ENCODE measurements at regions of chr14 and their contacts with region 1.

Region 1: GRCh38 chr14:69611201-69612011 is at the start of gene SUSD6:
- DNase-seq: peak; percentile 90 to 94 (median 92)
- ATAC-seq: peak; percentile 93
- H3K4me3 ChIP-seq: peak within 1 kb of the TSS; percentile 7 to 51
- H3K27ac ChIP-seq: peak within 1 kb of the TSS; percentile 73 to 99 (median 92)
- H3K4me1 ChIP-seq: peaks cover 56% of the 10 kb centered on the region
- H3K27me3 ChIP-seq: no peaks in the 10 kb centered on the region
- CTCF ChIP-seq: peak in 1 of 7 experiments; percentile 22
- POLR2A ChIP-seq: peak; percentile 55 to 76 (median 63)
- total RNA-seq, gene SUSD6: 24.6 to 25.1 TPM

Region 2: DNA sequence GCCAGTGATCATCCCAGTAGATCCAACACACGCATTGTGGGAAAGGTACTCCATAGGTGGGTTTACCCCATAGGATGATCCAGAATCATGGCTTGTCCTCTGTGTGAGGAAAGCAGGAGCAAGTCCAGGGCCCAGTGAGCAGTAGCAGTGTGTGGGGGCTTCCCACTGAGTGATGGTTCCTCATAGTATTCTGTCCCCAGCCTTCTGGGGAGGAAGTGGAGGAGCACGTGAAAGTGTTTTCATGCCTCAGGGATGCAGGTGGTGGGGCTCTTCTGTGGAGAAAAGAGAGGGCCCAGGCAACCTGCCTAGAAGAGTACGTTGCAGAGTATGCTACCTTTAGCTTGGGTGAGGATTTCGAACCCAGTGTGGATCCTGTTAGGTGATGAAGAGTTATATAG is 56.5 kb after region 1 on chr14:
- intact Hi-C with region 1: loop called (anchors 10 kb)
- DNase-seq: no peak
- ATAC-seq: no peak
- H3K4me3 ChIP-seq: no peak overlapping the region
- H3K27ac ChIP-seq: peak overlapping the region in 1 of 4 donors; percentile 25
- H3K4me1 ChIP-seq: peaks cover 80% of the 10 kb centered on the region
- H3K27me3 ChIP-seq: no peaks in the 10 kb centered on the region
- CTCF ChIP-seq: no peak
- POLR2A ChIP-seq: no peak